ENCODE measurements at regions of chr1 and their contacts with region 1.

Region 1: DNA sequence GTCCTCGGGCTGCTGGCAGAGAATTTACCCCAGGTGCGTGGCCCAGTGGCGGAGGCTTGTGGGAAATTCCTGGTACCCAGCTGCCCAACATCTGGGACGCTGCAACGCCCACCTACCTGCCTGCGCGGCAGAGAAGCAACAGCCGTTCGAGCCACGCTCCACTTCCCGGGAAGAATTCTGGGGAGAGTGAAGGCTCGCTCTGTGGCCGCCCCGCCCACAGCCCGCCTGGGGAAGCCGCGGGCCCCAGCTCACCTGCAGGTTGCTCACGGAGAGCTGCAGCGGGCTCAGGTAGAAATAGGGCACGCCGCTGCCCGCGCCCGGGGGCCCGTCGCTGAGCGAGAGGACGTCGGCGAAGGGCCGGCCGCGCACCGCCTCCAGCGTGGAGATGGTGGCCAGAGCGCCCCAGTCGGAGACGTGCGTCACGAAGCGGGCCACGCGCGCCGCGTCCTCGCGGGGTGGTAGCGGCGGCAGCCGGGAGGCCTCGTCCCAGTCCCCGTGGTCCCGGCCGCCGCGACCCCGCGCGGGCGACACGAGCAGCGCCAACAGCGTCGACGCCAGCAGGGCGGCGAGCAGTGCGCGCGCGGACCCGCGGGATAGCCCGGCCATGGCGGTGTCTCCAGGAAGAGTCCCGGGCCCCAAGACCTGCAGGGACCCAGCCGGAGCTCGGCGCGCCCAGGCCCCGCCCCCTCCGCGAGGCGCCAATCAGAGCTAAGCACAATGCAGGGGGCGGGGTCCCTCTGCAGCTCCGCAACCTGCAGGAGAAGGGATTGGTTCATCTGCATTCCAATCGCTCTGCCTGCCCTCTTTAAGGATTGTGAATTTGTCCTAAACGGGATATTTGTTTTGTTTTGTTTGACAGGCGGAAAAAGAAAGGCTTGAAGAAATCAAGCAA is at the start of gene CREG1:
- H3K4me3 ChIP-seq: peak within 1 kb of the TSS; percentile 67
- H3K27ac ChIP-seq: peak within 1 kb of the TSS; percentile 57; the same call in 1 of the 2 replicates
- H3K4me1 ChIP-seq: no peaks in the 10 kb centered on the region
- CTCF ChIP-seq: no peak

Region 2: DNA sequence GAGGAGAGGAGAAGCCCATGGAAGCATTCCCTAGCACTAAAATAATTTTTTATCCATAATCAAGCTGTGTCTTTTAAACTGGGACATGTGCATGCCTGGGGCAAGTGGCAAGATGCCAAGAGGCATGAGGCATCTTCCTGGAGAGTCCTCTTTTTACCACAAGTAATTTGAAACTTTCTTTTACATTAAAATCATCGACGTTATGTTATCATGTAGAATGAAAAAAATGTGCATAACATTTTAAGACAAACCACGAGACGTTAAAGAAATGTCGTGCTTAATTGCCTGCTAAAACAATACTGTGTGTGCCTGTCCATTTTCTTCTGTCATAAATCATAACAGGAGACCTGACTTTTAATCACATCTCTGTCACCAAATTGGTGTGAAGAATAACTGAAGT is 458.0 kb before region 1 on chr1:
- CTCF ChIA-PET with region 1: no interaction called
- POLR2A ChIA-PET with region 1: interaction called, 12 read pairs
- H3K4me3 ChIP-seq: no peak overlapping the region
- H3K27ac ChIP-seq: no peak overlapping the region
- H3K4me1 ChIP-seq: 0 out of 2 replicates have a peak, but pooled peaks cover 2% of the 10 kb centered on the region
- CTCF ChIP-seq: no peak

Region 3: DNA sequence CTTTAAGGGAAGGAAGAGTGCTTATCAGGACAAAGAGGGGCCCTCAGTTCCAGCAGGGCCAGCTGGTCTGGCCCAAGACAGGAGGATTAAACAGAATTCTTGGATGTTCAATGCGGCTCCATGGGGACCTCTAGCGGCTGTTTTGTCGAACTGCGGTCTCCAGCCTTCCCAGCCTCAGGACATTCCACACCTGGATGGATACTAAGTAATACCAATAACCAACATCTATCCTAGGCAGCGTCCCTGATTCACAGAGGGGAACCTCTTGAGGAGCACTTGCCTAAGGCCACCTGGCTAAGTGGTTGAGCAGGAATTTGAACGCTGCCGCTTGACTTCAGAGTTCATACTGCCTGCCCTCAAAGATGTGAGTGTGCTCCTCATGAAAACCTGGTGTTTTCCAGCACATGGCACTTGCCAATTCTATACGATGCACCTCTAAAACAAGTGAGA is 19.5 kb before region 1 on chr1:
- CTCF ChIA-PET with region 1: interaction called, 16 read pairs
- POLR2A ChIA-PET with region 1: interaction called, 3 read pairs
- H3K4me3 ChIP-seq: no peak overlapping the region
- H3K27ac ChIP-seq: no peak overlapping the region
- H3K4me1 ChIP-seq: no peaks in the 10 kb centered on the region
- CTCF ChIP-seq: peak; percentile 75

Region 4: GRCh38 chr1:167542109-167543032 is 11.0 kb before region 1 on chr1:
- CTCF ChIA-PET with region 1: interaction called, 39 read pairs
- POLR2A ChIA-PET with region 1: interaction called, 5 read pairs
- H3K4me3 ChIP-seq: no peak overlapping the region
- H3K27ac ChIP-seq: no peak overlapping the region
- H3K4me1 ChIP-seq: no peaks in the 10 kb centered on the region
- CTCF ChIP-seq: no peak

Region 5: DNA sequence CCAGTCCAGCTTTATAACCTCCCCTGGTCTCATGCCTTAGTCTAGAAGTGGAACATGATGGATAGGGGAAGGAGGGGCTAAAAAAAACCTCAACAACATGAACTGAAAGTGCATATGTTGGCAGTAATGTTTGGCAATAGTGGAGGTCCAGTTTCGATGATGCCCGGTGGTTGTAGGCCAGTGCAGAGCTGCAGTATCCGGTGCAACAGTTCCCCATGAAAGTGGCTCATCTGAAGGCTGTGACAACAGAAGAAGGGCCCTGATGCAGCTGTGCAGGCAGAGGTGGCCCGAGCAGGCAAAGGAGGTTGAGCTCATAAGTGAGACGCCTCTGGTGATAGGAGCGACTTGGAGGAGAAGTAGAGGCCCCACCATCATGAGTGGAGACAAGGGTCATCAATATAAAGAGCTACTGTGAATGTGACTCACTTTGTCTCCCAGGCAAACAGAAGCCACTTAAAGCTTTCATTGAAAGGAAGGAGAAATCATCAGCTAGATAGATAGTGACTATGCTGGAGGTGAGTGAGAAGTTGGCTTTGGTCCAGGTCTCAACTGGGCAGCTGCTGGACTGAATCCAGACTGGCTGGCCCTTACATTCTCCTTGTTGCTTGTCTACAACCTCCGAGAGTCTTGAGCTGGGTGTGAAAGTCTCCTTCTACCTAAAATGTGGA is 10.3 kb after region 1 on chr1:
- CTCF ChIA-PET with region 1: interaction called, 24 read pairs
- POLR2A ChIA-PET with region 1: interaction called, 24 read pairs
- H3K4me3 ChIP-seq: no peak overlapping the region
- H3K27ac ChIP-seq: no peak overlapping the region
- H3K4me1 ChIP-seq: peaks cover 8% of the 10 kb centered on the region; the same call in 1 of the 2 replicates
- CTCF ChIP-seq: no peak